RWPE1 (cell line): ENCODE measurements at regions of chr19 and their contacts with region 1.

Region 1: DNA sequence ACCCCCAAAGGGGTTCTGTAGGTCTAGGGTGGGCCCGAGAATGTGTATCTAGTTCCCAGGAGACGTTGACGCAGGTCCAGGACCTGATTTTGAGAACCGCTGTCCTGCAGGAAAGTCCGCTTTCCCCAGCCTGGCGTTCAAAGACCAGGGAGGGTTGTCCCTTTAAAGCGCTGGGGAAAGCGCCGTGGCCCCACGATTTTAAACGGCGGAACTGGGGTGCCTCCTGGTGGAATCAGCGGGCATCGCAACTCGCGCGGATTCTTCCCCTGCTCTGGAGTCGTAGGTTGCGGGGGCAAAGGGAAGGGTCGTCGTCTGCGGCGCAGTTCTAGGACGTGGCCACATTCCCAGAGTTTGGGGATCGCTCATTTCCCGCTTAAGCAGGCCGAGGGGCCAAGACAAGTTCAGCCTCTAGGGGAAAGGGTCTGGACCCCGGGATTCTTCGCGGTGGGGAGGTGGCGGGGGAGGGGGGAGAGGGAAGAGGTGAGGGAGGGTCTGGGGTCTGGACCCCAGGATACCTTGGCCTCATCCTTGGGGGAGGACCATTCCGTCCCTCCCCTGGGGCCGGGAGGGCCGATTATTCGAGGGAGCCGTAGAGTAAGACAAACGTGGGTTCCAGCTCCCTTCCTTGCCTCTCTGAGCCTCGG is 7.7 kb downstream of the PNMA8B start:
- DNase-seq: peak; percentile 75
- H3K27ac ChIP-seq: no peak overlapping the region
- CTCF ChIP-seq: peak; percentile 91

Region 2: DNA sequence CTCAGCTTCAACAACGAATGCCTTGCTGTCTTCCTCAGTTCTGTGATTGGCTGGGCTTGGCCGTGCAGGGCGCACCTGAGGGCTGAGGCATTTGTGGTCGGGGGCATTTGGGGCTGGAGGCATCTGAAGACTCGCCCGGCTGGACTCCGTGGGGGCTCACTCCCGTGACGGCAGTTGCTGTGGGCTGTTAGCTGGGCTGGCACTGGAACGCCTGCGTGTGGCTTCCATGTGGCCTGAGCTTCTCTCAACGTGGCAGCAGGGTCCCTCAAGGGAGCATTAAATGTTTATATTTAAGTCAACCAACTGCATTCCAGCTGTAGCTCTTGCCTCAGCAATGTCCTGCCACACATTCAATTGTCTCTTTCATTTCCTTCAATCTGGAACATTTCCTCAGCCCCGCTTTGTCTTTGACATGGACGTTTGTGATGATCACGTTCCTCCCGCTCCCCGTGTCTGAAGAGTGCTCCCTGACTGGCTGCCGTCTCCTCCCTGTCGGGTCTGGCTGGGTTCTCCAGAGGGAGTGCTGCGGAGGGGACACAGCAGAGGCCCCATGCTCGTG is 95.6 kb before region 1 on chr19:
- CTCF ChIA-PET with region 1: interaction called, 38 read pairs
- POLR2A ChIA-PET with region 1: no interaction called
- DNase-seq: no peak
- H3K27ac ChIP-seq: peak overlapping the region; percentile 58
- CTCF ChIP-seq: no peak